A549 (cell line): ENCODE measurements at regions of chr5 and their contacts with region 1.

Region 1: DNA sequence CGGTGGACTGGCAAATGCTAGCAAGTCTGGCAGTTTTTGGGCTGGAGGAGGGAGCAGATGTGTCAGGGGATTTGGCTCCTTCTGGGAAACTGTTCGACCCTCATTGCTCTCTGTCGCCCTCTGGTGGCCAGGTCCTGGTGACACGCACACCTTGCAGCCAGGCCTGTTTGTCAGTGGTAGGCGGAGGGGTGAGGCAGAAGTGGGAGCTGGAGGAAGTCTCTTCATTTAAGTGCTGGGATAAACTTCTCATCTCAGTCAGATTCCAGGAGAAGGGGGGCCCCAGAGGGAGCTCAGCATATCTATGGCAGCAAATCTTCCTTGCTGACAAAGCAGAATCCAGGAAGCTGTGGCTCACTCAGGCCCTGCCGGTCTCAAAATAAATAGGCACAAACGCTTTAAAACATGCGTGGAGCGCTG is 326.5 kb downstream of the ZSWIM6 start:
- DNase-seq: peak; percentile 77 to 79
- ATAC-seq: peak; percentile 83 to 96
- H3K4me3 ChIP-seq: no peak overlapping the region
- H3K27ac ChIP-seq: peak overlapping the region; percentile 42 to 52; a peak in 3 of 6 replicates
- H3K4me1 ChIP-seq: peaks cover 10% of the 10 kb centered on the region
- CTCF ChIP-seq: peak; percentile 89
- EP300 ChIP-seq: no peak
- POLR2A ChIP-seq: no peak
- RAD21 ChIP-seq: peak; percentile 91 to 93

Region 2: GRCh38 chr5:61202213-61202612 is 456.4 kb before region 1 on chr5:
- CTCF ChIA-PET with region 1: no interaction called
- POLR2A ChIA-PET with region 1: no interaction called
- DNase-seq: no peak
- ATAC-seq: no peak
- H3K4me3 ChIP-seq: no peak overlapping the region
- H3K27ac ChIP-seq: no peak overlapping the region
- H3K4me1 ChIP-seq: no peaks in the 10 kb centered on the region
- CTCF ChIP-seq: no peak
- EP300 ChIP-seq: no peak
- POLR2A ChIP-seq: no peak
- RAD21 ChIP-seq: no peak

Region 3: DNA sequence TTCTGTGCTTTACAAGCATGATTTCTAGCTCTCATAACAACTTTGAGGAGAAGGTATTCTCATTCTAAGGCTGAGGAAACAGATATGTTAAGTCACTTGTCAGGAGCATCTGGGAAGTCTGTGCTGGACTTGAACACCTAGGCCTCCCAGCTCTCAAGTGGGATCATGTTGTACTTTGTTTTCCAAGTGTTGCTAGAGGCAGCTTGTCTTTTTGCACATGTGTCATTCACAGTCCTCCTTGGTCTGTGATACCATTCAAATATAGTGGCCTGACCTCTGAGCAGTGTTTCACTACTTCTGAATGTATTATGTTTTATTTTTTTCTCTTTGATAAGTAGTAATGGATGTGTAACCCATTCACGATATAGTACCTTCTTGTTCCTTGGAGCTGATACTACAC is 305.3 kb before region 1 on chr5:
- CTCF ChIA-PET with region 1: interaction called, 10 read pairs
- POLR2A ChIA-PET with region 1: no interaction called
- DNase-seq: no peak
- ATAC-seq: peak; percentile 26 to 30; a peak in 4 of 6 replicates
- H3K4me3 ChIP-seq: no peak overlapping the region
- H3K27ac ChIP-seq: no peak overlapping the region
- H3K4me1 ChIP-seq: peaks cover 37% of the 10 kb centered on the region; the same call in 2 of the 3 replicates
- CTCF ChIP-seq: no peak
- EP300 ChIP-seq: no peak
- POLR2A ChIP-seq: no peak
- RAD21 ChIP-seq: no peak

Region 4: GRCh38 chr5:61623401-61624076 is 35.1 kb before region 1 on chr5:
- CTCF ChIA-PET with region 1: interaction called, 19 read pairs
- POLR2A ChIA-PET with region 1: no interaction called
- DNase-seq: peak; percentile 54 to 60
- ATAC-seq: peak in 1 of 2 experiments; percentile 55; a peak in 3 of 6 replicates
- H3K4me3 ChIP-seq: no peak overlapping the region
- H3K27ac ChIP-seq: peak overlapping the region; percentile 82 to 86
- H3K4me1 ChIP-seq: peaks cover 68% of the 10 kb centered on the region
- CTCF ChIP-seq: peak; percentile 42
- EP300 ChIP-seq: no peak
- POLR2A ChIP-seq: no peak
- RAD21 ChIP-seq: peak; percentile 47 to 50; a peak in 4 of 5 replicates

Region 5: DNA sequence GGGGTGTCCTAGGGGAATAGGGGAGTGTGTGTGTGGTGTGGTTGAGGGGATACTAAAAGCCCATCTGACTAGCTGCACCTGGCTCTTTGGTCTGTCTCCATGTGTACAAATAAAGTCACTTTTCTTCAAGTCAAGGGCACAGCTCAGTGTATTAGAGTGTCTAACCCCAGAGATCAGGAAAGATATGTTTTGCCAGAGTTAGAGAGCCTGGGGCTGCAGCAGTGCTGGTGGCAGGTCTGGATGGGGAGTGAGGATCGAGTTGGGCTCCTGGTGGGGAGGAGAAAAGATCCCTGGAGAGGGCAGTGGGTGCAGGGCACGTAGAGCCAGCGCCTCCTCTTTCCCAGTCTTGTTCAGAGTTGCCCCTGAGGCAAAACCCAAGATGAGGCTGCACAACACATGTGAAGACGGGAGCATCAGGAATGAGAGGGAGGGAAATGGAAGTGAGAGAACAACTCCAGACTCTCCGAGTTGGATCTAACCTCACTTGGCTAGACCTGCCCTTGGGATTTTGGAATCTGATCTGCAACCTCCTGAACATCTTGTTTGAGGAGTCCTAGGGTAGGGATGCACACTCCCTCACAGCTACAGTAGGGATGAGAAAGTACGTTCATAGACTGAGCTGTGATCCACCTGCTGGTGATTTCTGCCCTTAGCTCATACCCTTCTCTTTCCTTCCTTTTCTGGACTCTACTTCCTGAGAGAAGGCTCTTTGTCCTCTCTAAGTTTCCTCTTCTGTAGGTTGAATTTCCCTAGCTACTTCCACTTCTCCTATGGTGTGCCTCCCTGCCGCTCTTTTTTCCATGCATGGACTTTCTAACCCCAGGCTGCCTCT is 16.6 kb before region 1 on chr5:
- CTCF ChIA-PET with region 1: interaction called, 39 read pairs
- POLR2A ChIA-PET with region 1: no interaction called
- DNase-seq: peak in 1 of 2 experiments; percentile 42
- ATAC-seq: peak; percentile 79 to 90
- H3K4me3 ChIP-seq: no peak overlapping the region
- H3K27ac ChIP-seq: peak overlapping the region in 1 of 2 experiments; percentile 47; a peak in 2 of 6 replicates
- H3K4me1 ChIP-seq: peaks cover 26% of the 10 kb centered on the region
- CTCF ChIP-seq: peak; percentile 31
- EP300 ChIP-seq: no peak
- POLR2A ChIP-seq: no peak
- RAD21 ChIP-seq: peak; percentile 49 to 50; a peak in 4 of 5 replicates

Region 6: GRCh38 chr5:61647672-61648071 is 10.9 kb before region 1 on chr5:
- CTCF ChIA-PET with region 1: interaction called, 39 read pairs
- POLR2A ChIA-PET with region 1: no interaction called
- DNase-seq: no peak
- ATAC-seq: no peak
- H3K4me3 ChIP-seq: no peak overlapping the region
- H3K27ac ChIP-seq: no peak overlapping the region
- H3K4me1 ChIP-seq: peaks cover 5% of the 10 kb centered on the region; the same call in 2 of the 3 replicates
- CTCF ChIP-seq: no peak
- EP300 ChIP-seq: no peak
- POLR2A ChIP-seq: no peak
- RAD21 ChIP-seq: no peak

Region 7: DNA sequence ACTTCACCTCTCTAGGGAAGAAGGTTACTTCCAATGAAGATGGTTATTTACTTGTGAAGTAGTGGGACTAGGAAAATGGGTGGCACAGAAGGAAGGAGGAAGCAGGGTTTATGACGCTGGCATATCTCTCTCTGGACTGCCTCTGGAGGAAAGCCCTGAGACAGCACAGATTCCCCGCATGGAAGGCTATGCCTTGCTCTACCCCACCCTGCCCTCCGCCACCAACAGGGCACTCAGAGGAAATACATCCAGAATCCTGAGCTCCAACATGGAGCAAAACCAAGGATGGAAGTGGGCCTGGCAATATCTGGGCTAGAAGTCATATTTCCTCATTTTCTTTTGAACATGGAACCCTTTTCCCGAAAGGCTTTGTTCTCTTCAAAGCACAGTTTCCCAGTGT is 20.4 kb after region 1 on chr5:
- CTCF ChIA-PET with region 1: interaction called, 13 read pairs
- POLR2A ChIA-PET with region 1: no interaction called
- DNase-seq: peak; percentile 22 to 61
- ATAC-seq: peak; percentile 78 to 98; a peak in 5 of 6 replicates
- H3K4me3 ChIP-seq: no peak overlapping the region
- H3K27ac ChIP-seq: no peak overlapping the region
- H3K4me1 ChIP-seq: no peaks in the 10 kb centered on the region
- CTCF ChIP-seq: no peak; the same call in 2 of the 3 replicates
- EP300 ChIP-seq: no peak
- POLR2A ChIP-seq: no peak
- RAD21 ChIP-seq: peak in 1 of 2 experiments; percentile 30; a peak in 2 of 5 replicates